ENCODE measurements at regions of chr5 and their contacts with region 1.

Region 1: GRCh38 chr5:68086857-68087256 is 128.7 kb upstream of the PIK3R1 start:
- DNase-seq: peak; percentile 74
- ATAC-seq: peak; percentile 88

Region 2: GRCh38 chr5:67693956-67694809 is 392.7 kb before region 1 on chr5:
- intact Hi-C with region 1: loop called (anchors 5 kb)
- DNase-seq: peak; percentile 63
- ATAC-seq: peak; percentile 98

Region 3: GRCh38 chr5:68178579-68178978 is 91.7 kb after region 1 on chr5:
- intact Hi-C with region 1: no loop called
- DNase-seq: no peak
- ATAC-seq: no peak

Measured in sciatic nerve (tissue), 2 donors.